ENCODE measurements at regions of chr22 and their contacts with region 1.

Region 1: DNA sequence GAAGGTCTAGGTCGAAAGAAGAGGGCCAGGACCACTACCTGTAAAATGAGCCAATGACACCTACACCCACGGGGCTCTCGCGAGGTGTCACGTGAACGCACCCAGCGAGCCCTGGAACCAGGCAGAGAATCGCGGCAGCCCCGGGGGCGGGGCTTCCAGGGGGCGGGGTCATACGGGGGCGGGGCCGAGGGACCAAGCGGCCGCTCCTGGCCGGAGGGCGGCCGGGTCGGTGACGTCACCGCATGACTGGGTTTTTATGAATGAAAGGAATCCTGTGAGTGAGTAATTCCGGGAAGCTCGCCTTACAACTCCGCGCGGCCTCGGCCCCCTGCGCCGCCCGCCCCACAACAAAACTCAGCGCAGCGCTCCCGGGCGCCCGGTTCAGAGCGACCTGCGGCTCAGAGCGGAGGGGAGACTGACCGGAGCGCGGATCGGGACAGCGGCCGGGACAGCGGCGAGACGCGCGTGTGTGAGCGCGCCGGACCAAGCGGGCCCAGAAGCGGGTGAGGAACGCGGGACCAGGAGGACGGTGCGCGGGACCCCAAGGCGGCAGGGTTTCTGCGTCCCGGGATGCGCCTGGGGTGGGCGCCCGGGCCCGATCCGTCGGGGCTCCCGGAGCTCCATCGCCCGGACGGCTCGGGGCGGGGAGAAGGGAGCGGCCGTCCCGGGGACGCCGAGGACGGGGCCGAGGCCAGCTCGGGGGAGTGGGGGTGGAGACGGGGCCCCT is at the start of gene MAFF:
- DNase-seq: peak; percentile 96
- H3K4me3 Mint-ChIP-seq: peak within 1 kb of the TSS; percentile 85
- H3K27ac Mint-ChIP-seq: peak within 1 kb of the TSS; percentile 80
- H3K4me1 Mint-ChIP-seq: peaks cover 23% of the 10 kb centered on the region
- H3K27me3 Mint-ChIP-seq: no peaks in the 10 kb centered on the region
- CTCF ChIP-seq: no peak
- total RNA-seq, gene MAFF: 54.7 and 71.4 TPM in 2 replicates

Region 2: GRCh38 chr22:37394341-37394740 is 807.5 kb before region 1 on chr22:
- CTCF ChIA-PET with region 1: no interaction called
- POLR2A ChIA-PET with region 1: no interaction called
- intact Hi-C with region 1: no loop called
- DNase-seq: no peak
- H3K4me3 Mint-ChIP-seq: no peak overlapping the region
- H3K27ac Mint-ChIP-seq: no peak overlapping the region
- H3K4me1 Mint-ChIP-seq: no peaks in the 10 kb centered on the region
- H3K27me3 Mint-ChIP-seq: no peaks in the 10 kb centered on the region
- CTCF ChIP-seq: no peak

Region 3: GRCh38 chr22:38181453-38182247 is 20.2 kb before region 1 on chr22 and contains the start of gene PLA2G6:
- CTCF ChIA-PET with region 1: interaction called, 5 read pairs
- POLR2A ChIA-PET with region 1: interaction called, 134 read pairs
- intact Hi-C with region 1: loop called (anchors 1 kb)
- DNase-seq: peak; percentile 99
- H3K4me3 Mint-ChIP-seq: peak within 1 kb of the TSS; percentile 97
- H3K27ac Mint-ChIP-seq: peak within 1 kb of the TSS; percentile 99
- H3K4me1 Mint-ChIP-seq: peaks cover 34% of the 10 kb centered on the region
- H3K27me3 Mint-ChIP-seq: no peaks in the 10 kb centered on the region
- CTCF ChIP-seq: no peak
- total RNA-seq, gene PLA2G6: 37.5 and 40.3 TPM in 2 replicates

Region 4: GRCh38 chr22:38187413-38188212 is 14.3 kb before region 1 on chr22:
- CTCF ChIA-PET with region 1: interaction called, 3 read pairs
- POLR2A ChIA-PET with region 1: interaction called, 134 read pairs
- intact Hi-C with region 1: no loop called
- DNase-seq: peak; percentile 57
- H3K4me3 Mint-ChIP-seq: no peak overlapping the region
- H3K27ac Mint-ChIP-seq: peak overlapping the region; percentile 51
- H3K4me1 Mint-ChIP-seq: peaks cover 18% of the 10 kb centered on the region
- H3K27me3 Mint-ChIP-seq: no peaks in the 10 kb centered on the region
- CTCF ChIP-seq: no peak

Region 5: DNA sequence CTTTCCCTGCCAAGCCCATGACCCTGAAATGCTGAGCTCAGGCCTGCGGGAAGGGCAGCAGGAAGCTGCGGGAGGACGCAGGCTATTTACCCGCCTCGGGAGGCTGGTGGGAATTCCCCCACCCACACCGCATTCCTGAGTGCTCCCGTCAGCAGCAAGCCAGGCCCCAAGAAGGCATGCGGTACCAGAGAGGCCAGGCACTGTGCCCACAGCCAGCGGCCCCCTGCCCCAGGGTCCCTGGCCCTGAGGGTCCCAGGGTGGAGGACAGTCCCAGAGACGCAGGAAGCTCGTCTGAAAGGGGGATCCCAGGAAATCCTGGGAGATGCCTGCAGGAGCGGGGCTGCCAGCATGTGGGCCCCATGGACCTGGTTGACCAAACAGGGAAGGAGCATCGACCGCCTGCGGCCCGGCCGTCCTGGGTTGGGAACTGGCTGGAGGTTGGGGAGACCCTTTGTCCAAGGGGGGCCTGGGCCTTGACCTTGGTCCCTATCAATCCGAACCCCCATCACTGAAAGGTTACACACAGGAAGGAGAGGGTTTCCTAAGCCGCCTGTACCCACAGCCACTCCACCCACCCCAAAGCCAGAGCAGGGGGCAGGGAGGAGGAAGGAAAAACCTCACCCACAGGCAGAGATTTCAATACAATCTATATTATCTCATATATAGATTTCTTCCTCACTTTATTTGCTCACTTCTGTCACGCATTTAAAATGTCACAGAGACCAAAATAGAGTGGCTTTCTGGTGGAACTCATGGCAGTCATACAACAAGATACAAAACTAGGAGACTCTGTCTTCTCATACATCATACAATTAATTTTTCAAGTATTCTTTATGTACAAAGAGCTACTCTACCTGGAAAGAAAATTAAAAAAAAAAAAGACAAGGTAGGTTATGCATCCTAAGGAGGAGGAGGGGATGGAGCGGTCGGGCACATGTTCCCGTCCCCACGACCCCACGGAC is 17.1 kb after region 1 on chr22:
- CTCF ChIA-PET with region 1: interaction called, 3 read pairs
- POLR2A ChIA-PET with region 1: interaction called, 64 read pairs
- intact Hi-C with region 1: no loop called
- DNase-seq: peak; percentile 93
- H3K4me3 Mint-ChIP-seq: peak overlapping the region; percentile 26
- H3K27ac Mint-ChIP-seq: peak overlapping the region; percentile 97
- H3K4me1 Mint-ChIP-seq: peaks cover 48% of the 10 kb centered on the region
- H3K27me3 Mint-ChIP-seq: no peaks in the 10 kb centered on the region
- CTCF ChIP-seq: no peak

Region 6: GRCh38 chr22:38230108-38230825 is 28.4 kb after region 1 on chr22:
- CTCF ChIA-PET with region 1: interaction called, 9 read pairs
- POLR2A ChIA-PET with region 1: interaction called, 51 read pairs
- intact Hi-C with region 1: loop called (anchors 2 kb)
- DNase-seq: peak; percentile 85
- H3K4me3 Mint-ChIP-seq: no peak overlapping the region
- H3K27ac Mint-ChIP-seq: peak overlapping the region; percentile 83
- H3K4me1 Mint-ChIP-seq: peaks cover 24% of the 10 kb centered on the region
- H3K27me3 Mint-ChIP-seq: no peaks in the 10 kb centered on the region
- CTCF ChIP-seq: peak; percentile 53

Region 7: GRCh38 chr22:38298312-38299000 is 96.6 kb after region 1 on chr22:
- CTCF ChIA-PET with region 1: no interaction called
- POLR2A ChIA-PET with region 1: interaction called, 13 read pairs
- intact Hi-C with region 1: no loop called
- DNase-seq: peak; percentile 100
- H3K4me3 Mint-ChIP-seq: peak overlapping the region; percentile 45
- H3K27ac Mint-ChIP-seq: peak overlapping the region; percentile 98
- H3K4me1 Mint-ChIP-seq: peaks cover 42% of the 10 kb centered on the region
- H3K27me3 Mint-ChIP-seq: no peaks in the 10 kb centered on the region
- CTCF ChIP-seq: peak; percentile 50

Region 8: GRCh38 chr22:38305471-38306448 is 103.9 kb after region 1 on chr22:
- CTCF ChIA-PET with region 1: no interaction called
- POLR2A ChIA-PET with region 1: interaction called, 12 read pairs
- intact Hi-C with region 1: no loop called
- DNase-seq: peak; percentile 53
- H3K4me3 Mint-ChIP-seq: peak overlapping the region; percentile 38
- H3K27ac Mint-ChIP-seq: peak overlapping the region; percentile 98
- H3K4me1 Mint-ChIP-seq: peaks cover 64% of the 10 kb centered on the region
- H3K27me3 Mint-ChIP-seq: no peaks in the 10 kb centered on the region
- CTCF ChIP-seq: no peak

Measured in MCF 10A (cell line).